Activated CD4-positive, alpha-beta memory T cell treated with anti-CD3 and anti-CD28 coated beads, Interleukin-2, amount 10 ng/mL, durations not matched to agents 7 days and 5 days (primary cell): ENCODE measurements at regions of chr15 and their contacts with region 1.

Region 1: GRCh38 chr15:89358755-89359439 is 24.3 kb upstream of the POLG start:
- DNase-seq: peak; percentile 85
- H3K4me3 Mint-ChIP-seq: peak overlapping the region; percentile 79
- H3K27ac Mint-ChIP-seq: no peak overlapping the region
- H3K4me1 Mint-ChIP-seq: peaks cover 12% of the 10 kb centered on the region
- H3K27me3 Mint-ChIP-seq: peaks cover 82% of the 10 kb centered on the region

Region 2: GRCh38 chr15:89329329-89330084 is 29.4 kb before region 1 on chr15:
- CTCF ChIA-PET with region 1: interaction called, 47 read pairs
- POLR2A ChIA-PET with region 1: interaction called, 5 read pairs
- DNase-seq: peak; percentile 72
- H3K4me3 Mint-ChIP-seq: peak overlapping the region; percentile 46
- H3K27ac Mint-ChIP-seq: peak overlapping the region; percentile 85
- H3K4me1 Mint-ChIP-seq: peaks cover 51% of the 10 kb centered on the region
- H3K27me3 Mint-ChIP-seq: no peaks in the 10 kb centered on the region

Region 3: GRCh38 chr15:89346516-89347231 is 12.2 kb before region 1 on chr15:
- CTCF ChIA-PET with region 1: interaction called, 21 read pairs
- POLR2A ChIA-PET with region 1: no interaction called
- DNase-seq: no peak
- H3K4me3 Mint-ChIP-seq: no peak overlapping the region
- H3K27ac Mint-ChIP-seq: no peak overlapping the region
- H3K4me1 Mint-ChIP-seq: peaks cover 9% of the 10 kb centered on the region
- H3K27me3 Mint-ChIP-seq: peaks cover 20% of the 10 kb centered on the region

Region 4: DNA sequence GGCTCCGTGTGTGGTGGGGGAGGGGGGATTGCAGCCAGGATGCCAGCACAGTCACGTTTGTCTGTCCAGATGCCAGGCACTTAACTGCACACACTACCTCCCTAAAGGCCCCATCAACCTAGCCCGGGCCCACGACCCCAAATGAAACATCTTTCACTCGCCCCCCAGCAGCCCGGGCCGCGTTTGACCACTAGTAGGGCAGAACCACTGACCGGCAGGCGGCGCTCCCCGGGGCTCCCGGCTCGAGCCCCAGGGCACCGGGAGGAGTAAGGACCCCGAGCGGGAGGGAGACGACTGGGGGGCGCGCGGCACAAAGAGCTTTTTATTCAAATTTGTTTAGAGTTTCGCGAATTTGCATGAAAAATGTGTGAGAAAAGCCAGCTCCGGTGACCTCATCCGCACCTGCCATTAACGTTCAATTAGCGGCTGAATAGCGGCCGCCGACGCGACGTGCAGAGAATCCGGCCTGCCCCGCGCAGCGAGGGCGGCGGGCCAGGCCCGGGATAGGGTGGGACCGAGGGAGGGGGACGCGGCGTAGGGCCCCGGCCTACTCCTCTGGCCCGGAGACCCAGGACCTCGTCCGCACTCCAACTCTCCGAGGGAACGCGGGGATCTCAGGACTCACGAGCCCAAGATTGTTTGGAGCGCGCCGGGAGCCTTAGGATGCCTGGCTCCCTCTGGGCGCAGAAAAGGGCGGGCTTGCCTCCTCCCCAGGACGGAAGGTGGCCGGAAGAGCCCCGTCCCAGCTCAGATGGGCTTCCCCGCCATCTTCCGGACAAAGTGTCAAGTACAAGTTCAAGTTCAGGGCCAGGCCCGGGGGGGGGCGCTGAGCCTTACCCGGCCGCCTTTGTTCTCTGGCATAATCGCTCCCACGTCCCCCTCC is 40.6 kb after region 1 on chr15:
- CTCF ChIA-PET with region 1: interaction called, 51 read pairs
- POLR2A ChIA-PET with region 1: no interaction called
- DNase-seq: peak; percentile 41
- H3K4me3 Mint-ChIP-seq: peak overlapping the region; percentile 69
- H3K27ac Mint-ChIP-seq: no peak overlapping the region
- H3K4me1 Mint-ChIP-seq: peaks cover 19% of the 10 kb centered on the region
- H3K27me3 Mint-ChIP-seq: peaks cover 76% of the 10 kb centered on the region

Region 5: DNA sequence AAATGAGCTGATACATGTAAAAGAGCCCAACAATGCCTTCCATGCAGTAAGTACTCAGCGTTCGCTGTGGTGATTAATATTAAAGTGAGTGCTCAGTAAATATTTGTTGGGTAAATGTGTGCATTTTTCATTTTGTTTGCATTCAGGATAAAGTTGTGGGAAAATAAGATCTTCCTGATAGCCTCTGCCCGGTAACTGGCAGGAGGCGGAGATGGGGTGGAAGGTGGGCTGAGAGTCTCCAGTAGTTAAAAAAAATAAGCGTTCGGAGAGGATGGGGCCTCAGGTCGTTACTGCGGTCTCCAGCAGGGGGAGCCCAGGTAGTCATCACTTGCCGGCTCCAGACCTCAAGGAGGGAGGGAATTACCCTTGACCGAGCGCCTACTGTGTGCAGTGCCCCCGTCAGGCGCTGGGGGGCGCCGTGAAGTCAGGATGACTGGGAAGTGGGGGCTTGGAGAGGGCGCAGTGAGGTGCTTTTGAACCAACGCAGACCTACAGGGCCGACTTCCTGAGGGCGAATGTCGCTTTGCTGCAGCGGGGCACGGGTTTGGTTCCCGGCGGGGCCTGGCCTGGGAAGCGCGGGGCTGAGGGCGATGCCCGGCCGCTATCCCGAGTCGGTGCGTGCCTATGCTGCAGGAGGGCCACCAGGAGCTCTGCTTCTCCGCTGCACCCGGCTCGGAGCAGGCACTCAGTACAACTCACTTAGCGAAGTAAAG is 57.4 kb after region 1 on chr15:
- CTCF ChIA-PET with region 1: interaction called, 15 read pairs
- POLR2A ChIA-PET with region 1: interaction called, 3 read pairs
- DNase-seq: peak; percentile 82
- H3K4me3 Mint-ChIP-seq: no peak overlapping the region
- H3K27ac Mint-ChIP-seq: no peak overlapping the region
- H3K4me1 Mint-ChIP-seq: peaks cover 13% of the 10 kb centered on the region
- H3K27me3 Mint-ChIP-seq: peaks cover 79% of the 10 kb centered on the region

Region 6: GRCh38 chr15:89430530-89431341 is 71.8 kb after region 1 on chr15:
- CTCF ChIA-PET with region 1: interaction called, 142 read pairs
- POLR2A ChIA-PET with region 1: interaction called, 5 read pairs
- DNase-seq: peak; percentile 85
- H3K4me3 Mint-ChIP-seq: peak overlapping the region; percentile 59
- H3K27ac Mint-ChIP-seq: no peak overlapping the region
- H3K4me1 Mint-ChIP-seq: peaks cover 4% of the 10 kb centered on the region
- H3K27me3 Mint-ChIP-seq: peaks cover 34% of the 10 kb centered on the region